ENCODE measurements at regions of chr9 and their contacts with region 1.

Region 1: GRCh38 chr9:133048569-133048968 is 13.2 kb upstream of the CEL start:
- DNase-seq: no peak
- H3K4me3 ChIP-seq: no peak overlapping the region
- H3K27ac ChIP-seq: no peak overlapping the region
- H3K4me1 ChIP-seq: peaks cover 0 to 11% (median 3%) of the 10 kb centered on the region in 6 donors
- H3K27me3 ChIP-seq: no peaks in the 10 kb centered on the region
- CTCF ChIP-seq: peak in 1 of 11 experiments; percentile 28
- POLR2A ChIP-seq: no peak

Region 2: GRCh38 chr9:132982458-132982857 is 66.1 kb before region 1 on chr9:
- intact Hi-C with region 1: loop called (anchors 10 kb)
- DNase-seq: no peak
- H3K4me3 ChIP-seq: no peak overlapping the region
- H3K27ac ChIP-seq: no peak overlapping the region
- H3K4me1 ChIP-seq: peaks cover 4 to 55% (median 40%) of the 10 kb centered on the region in 6 donors
- H3K27me3 ChIP-seq: peaks cover 0 to 97% (median 21%) of the 10 kb centered on the region in 7 donors
- CTCF ChIP-seq: no peak
- POLR2A ChIP-seq: no peak

Region 3: DNA sequence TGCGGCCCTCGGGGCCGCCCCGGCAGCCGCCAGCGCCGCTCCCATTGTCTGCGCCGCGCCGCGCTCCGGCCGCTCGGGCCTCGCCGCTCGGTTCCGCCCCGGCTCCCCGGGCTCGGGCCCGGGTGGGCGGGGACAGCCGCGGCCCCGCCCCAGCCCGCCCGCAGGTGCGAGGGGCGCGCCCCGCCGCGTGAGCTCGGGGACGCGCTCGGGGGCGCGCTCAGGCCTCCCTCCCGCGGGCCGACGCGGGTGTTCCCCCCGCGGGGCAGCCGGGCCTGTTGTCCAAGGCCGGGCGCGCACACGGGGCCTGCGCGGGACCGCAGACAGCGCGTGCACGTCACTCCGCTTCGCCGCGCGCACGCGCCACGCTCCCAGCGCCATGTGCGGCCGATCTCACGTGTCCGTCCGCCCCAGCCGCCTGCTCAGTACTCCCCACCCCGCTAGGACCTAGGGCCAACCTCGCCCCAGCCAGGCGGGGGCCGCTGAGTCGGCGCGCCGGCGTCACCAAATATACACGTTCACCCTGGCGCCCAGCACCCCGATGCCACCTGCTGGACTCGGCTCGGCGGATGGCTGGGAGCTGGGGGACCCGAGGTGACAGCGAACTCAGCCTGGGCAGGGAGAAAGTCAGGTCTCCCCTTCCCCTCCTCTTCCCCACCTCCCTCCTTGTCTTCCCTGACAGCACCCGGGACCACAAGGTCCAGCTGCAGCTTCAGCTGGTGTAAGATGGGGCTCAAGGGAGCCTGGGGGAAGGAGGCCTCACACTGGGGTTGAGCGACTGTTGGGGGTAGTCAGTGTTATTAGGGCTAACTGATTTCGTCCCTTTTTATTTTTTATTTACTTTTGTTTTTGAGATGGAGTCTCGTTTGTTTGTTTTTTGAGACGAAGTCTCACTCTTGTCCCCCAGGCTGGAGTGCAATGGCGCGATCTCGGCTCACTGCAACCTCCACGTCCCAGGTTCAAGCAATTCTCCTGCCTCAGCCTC is 100.8 kb after region 1 on chr9:
- intact Hi-C with region 1: loop called (anchors 5 kb)
- DNase-seq: peak; percentile 96
- H3K4me3 ChIP-seq: peak overlapping the region; percentile 30 to 90 (median 63)
- H3K27ac ChIP-seq: peak overlapping the region; percentile 38 to 93 (median 85)
- H3K4me1 ChIP-seq: peaks cover 16 to 53% (median 36%) of the 10 kb centered on the region in 6 donors
- H3K27me3 ChIP-seq: no peaks in the 10 kb centered on the region
- CTCF ChIP-seq: peak in 7 of 11 experiments; percentile 22 to 56 (median 44)
- POLR2A ChIP-seq: no peak

Region 4: DNA sequence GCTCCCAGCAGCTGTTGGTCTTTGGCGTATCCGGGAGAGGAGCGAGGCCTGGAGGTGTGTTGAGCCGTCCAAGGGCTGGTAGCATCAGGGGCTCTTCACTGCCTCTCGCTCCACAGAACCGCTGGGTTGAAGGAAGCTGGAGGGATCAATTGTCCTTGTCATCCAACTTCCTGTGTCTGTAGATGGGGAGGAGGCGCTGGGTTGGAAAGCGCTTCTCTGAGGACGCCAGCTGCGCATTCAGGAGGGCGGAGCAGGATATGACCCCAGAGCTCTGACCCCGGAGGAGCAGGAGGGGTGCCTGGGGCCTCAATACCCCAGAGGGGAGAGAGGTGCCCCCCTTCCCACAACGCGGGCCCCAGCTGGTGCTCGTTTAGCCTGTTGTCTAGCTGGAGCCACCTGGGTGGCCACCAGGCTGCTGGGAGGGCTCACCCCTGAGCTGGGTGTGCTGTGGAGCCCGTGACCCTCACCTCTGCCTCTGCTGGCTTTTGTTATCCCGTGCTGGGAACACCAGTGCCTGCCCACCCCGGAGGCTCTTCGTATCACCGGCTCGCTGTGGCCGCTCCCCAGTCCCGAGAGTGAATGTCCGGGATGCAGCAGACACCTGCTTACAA is 585.6 kb after region 1 on chr9:
- intact Hi-C with region 1: no loop called
- DNase-seq: no peak
- H3K4me3 ChIP-seq: no peak overlapping the region
- H3K27ac ChIP-seq: peak overlapping the region in 4 of 8 donors; percentile 8 to 54 (median 26)
- H3K4me1 ChIP-seq: peaks cover 0 to 34% (median 10%) of the 10 kb centered on the region in 6 donors
- H3K27me3 ChIP-seq: peaks cover 0 to 66% (median 0%) of the 10 kb centered on the region in 7 donors
- CTCF ChIP-seq: no peak
- POLR2A ChIP-seq: no peak

Measured in spleen (tissue), 13 donors.